ENCODE measurements at regions of chr2 and their contacts with region 1.

Region 1: GRCh38 chr2:96856776-96857673 is 791 bp downstream of the ANKRD39 start:
- DNase-seq: no peak
- H3K4me3 ChIP-seq: peak overlapping the region; percentile 75 to 80
- H3K27ac ChIP-seq: peak overlapping the region; percentile 34 to 82; a peak in 3 of 4 replicates
- H3K4me1 ChIP-seq: peaks cover 0 to 18% of the 10 kb centered on the region in 2 experiments; a peak in 1 of 4 replicates
- H3K27me3 ChIP-seq: no peaks in the 10 kb centered on the region
- CTCF ChIP-seq: no peak
- EP300 ChIP-seq: no peak
- RAD21 ChIP-seq: no peak

Region 2: GRCh38 chr2:96574364-96574763 is 282.7 kb before region 1 on chr2:
- CTCF ChIA-PET with region 1: no interaction called
- POLR2A ChIA-PET with region 1: no interaction called
- DNase-seq: no peak
- H3K4me3 ChIP-seq: no peak overlapping the region
- H3K27ac ChIP-seq: no peak overlapping the region
- H3K4me1 ChIP-seq: no peaks in the 10 kb centered on the region
- H3K27me3 ChIP-seq: no peaks in the 10 kb centered on the region
- CTCF ChIP-seq: peak; percentile 21; the same call in 1 of the 2 replicates
- EP300 ChIP-seq: no peak
- RAD21 ChIP-seq: no peak

Region 3: GRCh38 chr2:96816128-96816835 is 40.7 kb before region 1 on chr2 and contains the start of gene CNNM3:
- CTCF ChIA-PET with region 1: interaction called, 13 read pairs
- POLR2A ChIA-PET with region 1: interaction called, 5 read pairs
- DNase-seq: peak; percentile 99
- H3K4me3 ChIP-seq: peak within 1 kb of the TSS; percentile 73 to 76
- H3K27ac ChIP-seq: peak within 1 kb of the TSS; percentile 39 to 91; a peak in 2 of 4 replicates
- H3K4me1 ChIP-seq: peaks cover 5 to 40% of the 10 kb centered on the region in 2 experiments; a peak in 3 of 4 replicates
- H3K27me3 ChIP-seq: no peaks in the 10 kb centered on the region
- CTCF ChIP-seq: peak; percentile 55
- EP300 ChIP-seq: peak in 1 of 2 experiments; percentile 6; a peak in 1 of 4 replicates
- RAD21 ChIP-seq: no peak
- polyA plus RNA-seq, gene CNNM3: 9.3 and 14.7 TPM in 2 replicates

Region 4: DNA sequence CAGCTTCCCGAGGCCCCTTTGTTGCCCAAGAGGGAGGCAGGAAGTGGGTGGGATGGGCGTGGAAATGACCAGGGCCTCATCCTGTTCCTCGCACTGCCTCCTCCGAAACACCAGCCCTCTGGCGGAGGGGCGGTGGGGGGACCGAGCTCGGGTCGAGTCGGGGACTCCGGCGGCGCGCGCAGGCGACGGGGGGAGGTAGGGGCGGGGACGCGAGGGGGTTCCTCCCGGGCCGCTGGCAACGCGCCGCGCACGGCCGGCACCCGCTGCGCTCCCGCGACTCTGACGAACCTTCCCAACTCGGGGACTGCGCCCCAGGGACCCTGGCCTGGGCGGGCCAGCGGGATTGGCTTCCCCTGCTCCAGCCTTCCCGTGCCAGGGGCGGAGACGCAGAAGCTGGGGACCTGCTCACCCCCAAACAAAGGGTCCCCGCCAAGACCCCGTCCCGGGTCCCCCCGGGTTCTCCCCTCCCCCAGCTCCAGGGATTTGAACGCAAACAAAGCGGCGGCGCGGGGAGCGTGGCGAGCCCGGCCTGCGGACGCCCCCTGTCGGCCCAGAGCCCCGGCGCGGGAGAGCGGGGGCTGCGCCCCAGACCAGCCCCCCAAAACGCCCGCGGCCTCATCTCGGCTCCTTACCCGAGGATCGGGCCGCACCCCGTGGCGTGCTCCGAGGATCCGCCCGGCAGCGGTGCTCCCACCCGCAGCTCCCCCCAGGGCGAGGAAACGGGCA is 11.7 kb after region 1 on chr2:
- CTCF ChIA-PET with region 1: interaction called, 59 read pairs
- POLR2A ChIA-PET with region 1: interaction called, 27 read pairs
- DNase-seq: peak; percentile 97
- H3K4me3 ChIP-seq: peak overlapping the region; percentile 94 to 95
- H3K27ac ChIP-seq: peak overlapping the region; percentile 83 to 92
- H3K4me1 ChIP-seq: peaks cover 9 to 29% of the 10 kb centered on the region in 2 experiments; a peak in 2 of 4 replicates
- H3K27me3 ChIP-seq: no peaks in the 10 kb centered on the region
- CTCF ChIP-seq: peak; percentile 76
- EP300 ChIP-seq: no peak
- RAD21 ChIP-seq: peak; percentile 19; the same call in 1 of the 2 replicates

Region 5: GRCh38 chr2:96907115-96908041 is 50.4 kb after region 1 on chr2:
- CTCF ChIA-PET with region 1: interaction called, 12 read pairs
- POLR2A ChIA-PET with region 1: interaction called, 9 read pairs
- DNase-seq: peak; percentile 79
- H3K4me3 ChIP-seq: no peak overlapping the region
- H3K27ac ChIP-seq: peak overlapping the region in 1 of 2 experiments; percentile 56; a peak in 1 of 4 replicates
- H3K4me1 ChIP-seq: peaks cover 0 to 23% of the 10 kb centered on the region in 2 experiments; a peak in 1 of 4 replicates
- H3K27me3 ChIP-seq: no peaks in the 10 kb centered on the region
- CTCF ChIP-seq: no peak
- EP300 ChIP-seq: no peak
- RAD21 ChIP-seq: no peak; the same call in 1 of the 2 replicates

Region 6: DNA sequence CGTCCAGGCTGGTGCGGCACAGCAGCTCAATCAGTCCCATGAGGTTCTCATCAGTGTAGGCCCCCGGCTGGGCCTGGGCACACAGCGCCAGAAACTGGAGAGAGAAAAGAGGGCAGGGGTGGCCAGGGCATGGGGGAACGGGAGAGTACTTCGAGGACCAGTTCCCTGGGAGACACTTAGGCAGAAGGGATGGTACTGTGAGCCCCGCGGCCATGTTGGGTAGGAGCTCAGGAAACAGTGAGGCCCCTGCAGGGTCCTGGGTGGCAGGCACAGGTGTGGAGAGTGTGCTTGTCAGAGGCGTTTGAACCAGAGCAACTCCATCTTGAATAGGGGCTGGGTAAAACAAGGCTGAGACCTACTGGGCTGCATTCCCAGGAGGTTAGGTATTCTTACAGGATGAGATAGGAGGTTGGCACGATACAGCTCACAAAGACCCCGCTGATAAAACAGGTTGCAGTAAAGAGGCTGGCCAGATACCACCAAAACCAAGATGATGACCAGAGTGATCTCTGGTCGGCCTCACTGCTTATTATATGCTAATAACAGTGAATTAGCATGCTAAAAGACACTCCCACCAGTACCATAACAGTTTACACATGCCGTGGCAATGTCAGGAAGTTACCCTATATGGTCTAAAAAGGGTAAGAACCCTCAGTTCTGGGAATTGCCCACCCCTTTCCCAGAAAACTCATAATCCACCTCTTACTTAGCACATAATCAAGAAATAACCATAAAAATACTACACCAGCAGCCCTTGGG is 64.7 kb after region 1 on chr2:
- CTCF ChIA-PET with region 1: interaction called, 13 read pairs
- POLR2A ChIA-PET with region 1: no interaction called
- DNase-seq: no peak
- H3K4me3 ChIP-seq: no peak overlapping the region
- H3K27ac ChIP-seq: no peak overlapping the region
- H3K4me1 ChIP-seq: peaks cover 0 to under 1% of the 10 kb centered on the region in 2 experiments; a peak in 1 of 4 replicates
- H3K27me3 ChIP-seq: peaks cover 15% of the 10 kb centered on the region; the same call in 1 of the 2 replicates
- CTCF ChIP-seq: no peak
- EP300 ChIP-seq: no peak
- RAD21 ChIP-seq: no peak

Region 7: GRCh38 chr2:96951093-96951654 is 94.1 kb after region 1 on chr2:
- CTCF ChIA-PET with region 1: interaction called, 332 read pairs
- POLR2A ChIA-PET with region 1: interaction called, 12 read pairs
- DNase-seq: peak; percentile 91
- H3K4me3 ChIP-seq: peak overlapping the region in 1 of 2 experiments; percentile 26; a peak in 1 of 4 replicates
- H3K27ac ChIP-seq: no peak overlapping the region
- H3K4me1 ChIP-seq: peaks cover 0 to 36% of the 10 kb centered on the region in 2 experiments; a peak in 2 of 4 replicates
- H3K27me3 ChIP-seq: no peaks in the 10 kb centered on the region
- CTCF ChIP-seq: peak; percentile 86
- EP300 ChIP-seq: no peak
- RAD21 ChIP-seq: peak; percentile 92

Region 8: DNA sequence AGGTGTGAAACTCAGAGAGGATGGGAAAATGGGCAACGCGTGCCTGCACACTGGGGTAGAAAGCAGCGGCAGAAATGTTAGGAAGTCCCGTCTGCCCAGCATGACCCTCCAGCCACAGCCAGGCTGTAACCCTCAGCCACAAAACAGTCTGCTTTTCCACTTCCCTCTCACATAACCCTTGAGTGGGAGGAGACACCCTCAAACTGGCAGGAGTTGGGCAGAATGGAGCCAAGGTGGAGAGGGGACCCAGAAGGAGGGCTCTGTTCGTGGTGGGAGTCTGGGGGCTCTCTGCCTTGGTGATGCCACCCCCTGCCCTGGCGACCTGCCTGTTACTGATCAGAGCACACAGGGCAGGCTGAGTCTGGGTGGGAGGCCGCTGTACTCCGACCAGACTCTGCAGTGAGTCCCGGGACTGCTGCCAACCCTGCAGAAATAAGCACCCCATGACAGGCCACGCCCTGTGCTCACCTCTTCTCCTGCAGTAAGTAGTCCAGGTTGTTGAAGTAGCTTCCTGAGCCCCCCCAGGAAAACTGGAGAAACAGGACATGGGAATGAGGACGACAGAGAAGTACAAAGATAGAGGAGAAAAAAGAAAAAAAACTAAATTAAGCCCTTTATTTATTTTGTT is 113.3 kb after region 1 on chr2:
- CTCF ChIA-PET with region 1: interaction called, 19 read pairs
- POLR2A ChIA-PET with region 1: no interaction called
- DNase-seq: no peak
- H3K4me3 ChIP-seq: no peak overlapping the region
- H3K27ac ChIP-seq: no peak overlapping the region
- H3K4me1 ChIP-seq: peaks cover 0 to 6% of the 10 kb centered on the region in 2 experiments; a peak in 1 of 4 replicates
- H3K27me3 ChIP-seq: no peaks in the 10 kb centered on the region
- CTCF ChIP-seq: no peak
- EP300 ChIP-seq: no peak
- RAD21 ChIP-seq: no peak